Activated CD4-positive, alpha-beta memory T cell treated with anti-CD3 and anti-CD28 coated beads for 36 hours (primary cell): ENCODE measurements at regions of chr19 and their contacts with region 1.

Region 1: GRCh38 chr19:2602391-2603181 is 99.9 kb downstream of the GNG7 start:
- DNase-seq: no peak
- H3K4me3 Mint-ChIP-seq: no peak overlapping the region
- H3K27ac Mint-ChIP-seq: no peak overlapping the region
- H3K4me1 Mint-ChIP-seq: peaks cover 15% of the 10 kb centered on the region
- H3K27me3 Mint-ChIP-seq: peaks cover 3% of the 10 kb centered on the region

Region 2: GRCh38 chr19:2455851-2456570 is 146.6 kb before region 1 on chr19:
- CTCF ChIA-PET with region 1: interaction called, 3 read pairs
- POLR2A ChIA-PET with region 1: interaction called, 10 read pairs
- intact Hi-C with region 1: no loop called
- DNase-seq: peak; percentile 62
- H3K4me3 Mint-ChIP-seq: peak overlapping the region; percentile 83
- H3K27ac Mint-ChIP-seq: peak overlapping the region; percentile 82
- H3K4me1 Mint-ChIP-seq: peaks cover 18% of the 10 kb centered on the region
- H3K27me3 Mint-ChIP-seq: no peaks in the 10 kb centered on the region

Region 3: GRCh38 chr19:2540646-2541454 is 61.7 kb before region 1 on chr19:
- CTCF ChIA-PET with region 1: no interaction called
- POLR2A ChIA-PET with region 1: no interaction called
- intact Hi-C with region 1: no loop called
- DNase-seq: no peak
- H3K4me3 Mint-ChIP-seq: no peak overlapping the region
- H3K27ac Mint-ChIP-seq: no peak overlapping the region
- H3K4me1 Mint-ChIP-seq: peaks cover 19% of the 10 kb centered on the region
- H3K27me3 Mint-ChIP-seq: peaks cover 1% of the 10 kb centered on the region

Region 4: GRCh38 chr19:2552859-2553258 is 49.7 kb before region 1 on chr19:
- CTCF ChIA-PET with region 1: no interaction called
- POLR2A ChIA-PET with region 1: interaction called, 5 read pairs
- intact Hi-C with region 1: loop called (anchors 2 kb)
- DNase-seq: peak; percentile 69
- H3K4me3 Mint-ChIP-seq: peak overlapping the region; percentile 59
- H3K27ac Mint-ChIP-seq: peak overlapping the region; percentile 72
- H3K4me1 Mint-ChIP-seq: peaks cover 19% of the 10 kb centered on the region
- H3K27me3 Mint-ChIP-seq: no peaks in the 10 kb centered on the region

Region 5: GRCh38 chr19:2636897-2637683 is 34.5 kb after region 1 on chr19:
- CTCF ChIA-PET with region 1: interaction called, 20 read pairs
- POLR2A ChIA-PET with region 1: no interaction called
- intact Hi-C with region 1: no loop called
- DNase-seq: peak; percentile 82
- H3K4me3 Mint-ChIP-seq: no peak overlapping the region
- H3K27ac Mint-ChIP-seq: no peak overlapping the region
- H3K4me1 Mint-ChIP-seq: peaks cover 5% of the 10 kb centered on the region
- H3K27me3 Mint-ChIP-seq: no peaks in the 10 kb centered on the region

Region 6: DNA sequence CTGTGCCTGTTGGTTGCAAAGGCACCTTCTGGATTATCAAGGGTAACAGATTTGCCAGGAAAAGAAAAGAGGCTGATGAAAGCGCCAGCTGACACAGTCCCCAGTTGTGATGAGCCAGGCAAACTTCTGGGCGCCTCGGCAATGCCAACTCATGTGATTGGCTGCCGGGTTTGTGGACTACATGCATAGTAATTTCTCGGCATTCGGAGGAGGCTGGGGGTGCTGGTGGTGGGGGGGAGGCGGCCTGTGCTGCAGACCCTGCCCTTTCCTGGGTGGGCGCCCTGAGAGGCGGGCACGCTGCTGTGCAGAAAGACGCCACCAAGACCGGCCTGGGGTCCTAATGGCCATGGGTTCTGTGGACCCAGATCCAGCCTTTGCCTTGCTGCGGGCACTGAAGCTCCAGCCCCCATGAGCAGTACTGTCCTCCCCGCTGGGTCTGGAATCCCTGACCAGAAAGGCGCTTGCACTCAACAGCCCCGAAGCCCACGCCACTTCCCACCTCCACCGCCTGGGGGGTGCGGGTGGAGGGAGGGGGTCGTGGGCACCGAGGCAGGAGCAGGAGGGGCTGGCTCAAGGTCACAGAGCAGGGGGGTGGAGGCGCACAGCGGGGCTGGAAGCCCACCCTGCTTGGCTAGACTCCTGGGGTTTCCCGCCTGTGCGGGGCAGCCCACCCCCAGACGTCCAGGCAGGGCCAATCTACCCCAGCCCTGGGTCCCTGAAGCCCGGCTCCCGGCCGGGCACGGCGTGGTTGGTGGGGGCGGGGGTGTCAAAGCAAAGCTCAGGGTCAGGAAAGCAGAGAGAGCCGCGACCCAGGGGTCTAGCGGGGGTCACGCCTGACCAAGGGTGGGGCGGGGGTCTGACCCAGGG is 117.6 kb after region 1 on chr19:
- CTCF ChIA-PET with region 1: no interaction called
- POLR2A ChIA-PET with region 1: no interaction called
- intact Hi-C with region 1: no loop called
- DNase-seq: no peak
- H3K4me3 Mint-ChIP-seq: peak overlapping the region; percentile 39
- H3K27ac Mint-ChIP-seq: no peak overlapping the region
- H3K4me1 Mint-ChIP-seq: no peaks in the 10 kb centered on the region
- H3K27me3 Mint-ChIP-seq: peaks cover 24% of the 10 kb centered on the region

Region 7: DNA sequence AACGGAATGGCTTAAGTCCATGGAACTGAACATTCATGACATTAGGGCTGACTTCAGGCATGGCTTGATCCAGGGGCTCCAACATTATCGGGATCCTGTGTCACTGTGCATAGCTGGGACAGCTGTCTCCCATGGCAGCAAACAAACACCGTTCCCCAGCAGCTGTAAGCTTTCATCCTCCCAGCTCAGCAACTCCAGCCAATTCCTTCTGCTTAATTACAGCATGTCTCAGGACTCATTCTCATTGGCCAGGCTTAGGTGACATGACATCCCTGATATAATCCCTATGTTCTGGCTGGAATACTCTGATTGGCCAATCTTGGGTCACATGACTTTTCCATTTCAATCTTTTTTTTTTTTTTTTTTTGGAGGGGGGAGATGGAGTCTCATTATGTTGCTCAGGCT is 470.6 kb after region 1 on chr19:
- CTCF ChIA-PET with region 1: no interaction called
- POLR2A ChIA-PET with region 1: no interaction called
- intact Hi-C with region 1: no loop called
- DNase-seq: no peak
- H3K4me3 Mint-ChIP-seq: no peak overlapping the region
- H3K27ac Mint-ChIP-seq: no peak overlapping the region
- H3K4me1 Mint-ChIP-seq: peaks cover 4% of the 10 kb centered on the region
- H3K27me3 Mint-ChIP-seq: no peaks in the 10 kb centered on the region